ENCODE measurements at regions of chr20 and their contacts with region 1.

Region 1: GRCh38 chr20:10553326-10553984 is 118.3 kb downstream of the SLX4IP start:
- DNase-seq: peak; percentile 84
- ATAC-seq: peak; percentile 70
- H3K4me3 ChIP-seq: no peak overlapping the region
- H3K27ac ChIP-seq: peak overlapping the region; percentile 7
- H3K4me1 ChIP-seq: peaks cover 79% of the 10 kb centered on the region
- H3K27me3 ChIP-seq: no peaks in the 10 kb centered on the region
- CTCF ChIP-seq: peak; percentile 96
- EP300 ChIP-seq: no peak
- POLR2A ChIP-seq: no peak
- RAD21 ChIP-seq: peak; percentile 97

Region 2: DNA sequence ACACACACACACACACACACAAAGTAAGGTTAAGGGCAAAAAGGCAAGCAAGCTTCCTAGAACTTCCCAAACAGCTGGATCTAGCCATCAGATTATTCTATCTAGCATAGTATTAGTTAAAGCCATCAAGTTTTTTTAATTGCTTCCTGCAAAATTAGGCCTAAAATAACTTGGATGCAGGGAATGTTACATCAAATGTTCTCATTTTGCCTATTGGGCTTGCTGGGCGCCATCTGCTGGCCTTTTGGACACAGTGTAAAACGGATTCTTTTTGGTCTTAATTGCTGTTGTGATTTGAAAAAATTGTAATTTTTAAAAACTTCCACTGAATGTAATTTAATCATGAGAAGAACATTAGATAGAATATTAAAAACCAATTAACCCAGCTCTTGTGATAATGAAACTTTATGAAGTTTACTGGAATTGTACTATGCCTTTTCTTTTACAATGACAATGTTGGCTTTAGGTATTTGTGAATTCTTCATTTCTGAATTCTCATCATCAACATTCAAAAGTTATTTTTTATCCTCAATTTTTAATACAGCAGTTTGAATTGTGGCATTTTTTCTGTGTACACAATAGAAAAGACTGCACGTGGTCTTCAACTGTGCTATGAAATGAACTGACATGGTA is 126.3 kb before region 1 on chr20:
- CTCF ChIA-PET with region 1: no interaction called
- POLR2A ChIA-PET with region 1: no interaction called
- in situ Hi-C with region 1: no loop called
- intact Hi-C with region 1: no loop called
- DNase-seq: peak; percentile 71
- ATAC-seq: peak; percentile 42; the same call in 1 of the 3 replicates
- H3K4me3 ChIP-seq: no peak overlapping the region
- H3K27ac ChIP-seq: no peak overlapping the region
- H3K4me1 ChIP-seq: peaks cover 65% of the 10 kb centered on the region
- H3K27me3 ChIP-seq: no peaks in the 10 kb centered on the region
- CTCF ChIP-seq: peak; percentile 83
- EP300 ChIP-seq: no peak
- POLR2A ChIP-seq: no peak
- RAD21 ChIP-seq: peak; percentile 84

Region 3: DNA sequence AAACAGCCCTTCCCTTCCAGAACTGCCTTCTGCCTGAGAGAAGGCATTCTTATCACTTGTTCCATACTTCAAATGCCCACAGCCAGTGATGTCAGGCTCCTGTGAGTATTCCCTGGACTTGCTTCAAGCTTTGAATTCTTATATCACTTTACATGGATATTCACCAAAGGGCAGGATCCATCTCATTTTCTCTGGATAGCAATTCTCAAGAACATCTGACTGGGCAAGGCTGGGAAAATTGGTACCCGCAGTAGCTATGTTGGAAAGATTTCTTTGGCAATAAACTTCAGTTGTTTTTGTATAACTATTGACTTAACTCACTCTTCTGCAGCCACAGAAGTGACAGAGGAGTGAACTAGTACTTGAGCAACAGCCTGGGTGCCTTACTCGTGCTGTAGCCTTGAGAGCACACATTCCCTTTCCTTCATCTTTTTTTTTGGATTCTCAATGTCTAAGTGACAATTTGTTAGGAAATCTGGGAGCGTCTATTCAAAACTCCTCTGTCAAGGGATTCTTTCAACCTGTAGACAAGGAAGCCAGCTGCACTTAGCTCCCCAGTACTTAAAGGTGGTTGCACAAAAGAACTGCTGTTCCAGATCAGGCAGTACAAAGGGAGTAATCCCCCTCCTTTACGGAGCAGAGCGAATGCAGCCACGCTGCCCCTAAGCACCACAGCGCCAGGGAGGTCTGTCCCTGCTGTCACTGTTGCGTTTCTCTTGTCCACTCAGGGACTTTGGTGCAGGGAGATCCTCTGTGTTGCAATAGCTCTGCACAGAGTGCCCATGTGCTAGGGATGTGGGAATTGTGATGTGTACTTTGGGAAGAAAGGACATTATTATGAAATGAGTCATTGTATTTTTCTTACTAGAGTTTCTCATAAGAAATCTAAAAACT is 50.8 kb after region 1 on chr20:
- CTCF ChIA-PET with region 1: no interaction called
- POLR2A ChIA-PET with region 1: interaction called, 3 read pairs
- in situ Hi-C with region 1: no loop called
- intact Hi-C with region 1: loop called (anchors 2 kb)
- DNase-seq: peak; percentile 99
- ATAC-seq: peak; percentile 100
- H3K4me3 ChIP-seq: peak overlapping the region; percentile 6 to 54 (median 9); a peak in 3 of 6 replicates
- H3K27ac ChIP-seq: peak overlapping the region; percentile 76
- H3K4me1 ChIP-seq: peaks cover 31% of the 10 kb centered on the region
- H3K27me3 ChIP-seq: no peaks in the 10 kb centered on the region
- CTCF ChIP-seq: peak; percentile 61
- EP300 ChIP-seq: peak; percentile 87 to 97; a peak in 3 of 4 replicates
- POLR2A ChIP-seq: peak; percentile 62 to 83
- RAD21 ChIP-seq: peak; percentile 60; the same call in 1 of the 2 replicates

Region 4: GRCh38 chr20:10647465-10647864 is 94.0 kb after region 1 on chr20:
- CTCF ChIA-PET with region 1: interaction called, 17 read pairs
- POLR2A ChIA-PET with region 1: no interaction called
- in situ Hi-C with region 1: no loop called
- intact Hi-C with region 1: loop called (anchors 1 kb)
- DNase-seq: peak; percentile 56
- ATAC-seq: peak; percentile 72
- H3K4me3 ChIP-seq: no peak overlapping the region
- H3K27ac ChIP-seq: no peak overlapping the region
- H3K4me1 ChIP-seq: peaks cover 7% of the 10 kb centered on the region
- H3K27me3 ChIP-seq: no peaks in the 10 kb centered on the region
- CTCF ChIP-seq: peak; percentile 59
- EP300 ChIP-seq: no peak
- POLR2A ChIP-seq: no peak
- RAD21 ChIP-seq: 0 out of 2 replicates have a peak, but pooled peaks have one; percentile 34

Region 5: GRCh38 chr20:10660661-10661060 is 107.2 kb after region 1 on chr20:
- CTCF ChIA-PET with region 1: no interaction called
- POLR2A ChIA-PET with region 1: no interaction called
- in situ Hi-C with region 1: loop called (anchors 5 kb)
- intact Hi-C with region 1: no loop called
- DNase-seq: no peak
- ATAC-seq: no peak; the same call in 2 of the 3 replicates
- H3K4me3 ChIP-seq: no peak overlapping the region
- H3K27ac ChIP-seq: peak overlapping the region; percentile 7
- H3K4me1 ChIP-seq: peaks cover 71% of the 10 kb centered on the region
- H3K27me3 ChIP-seq: no peaks in the 10 kb centered on the region
- CTCF ChIP-seq: no peak
- EP300 ChIP-seq: no peak
- POLR2A ChIP-seq: no peak; a peak in 1 of 4 replicates
- RAD21 ChIP-seq: no peak

Region 6: GRCh38 chr20:10940941-10941340 is 387.5 kb after region 1 on chr20:
- CTCF ChIA-PET with region 1: no interaction called
- POLR2A ChIA-PET with region 1: no interaction called
- in situ Hi-C with region 1: no loop called
- intact Hi-C with region 1: loop called (anchors 10 kb)
- DNase-seq: no peak
- ATAC-seq: no peak
- H3K4me3 ChIP-seq: no peak overlapping the region
- H3K27ac ChIP-seq: no peak overlapping the region
- H3K4me1 ChIP-seq: no peaks in the 10 kb centered on the region
- H3K27me3 ChIP-seq: no peaks in the 10 kb centered on the region
- CTCF ChIP-seq: no peak
- EP300 ChIP-seq: no peak
- POLR2A ChIP-seq: no peak
- RAD21 ChIP-seq: no peak

Region 7: DNA sequence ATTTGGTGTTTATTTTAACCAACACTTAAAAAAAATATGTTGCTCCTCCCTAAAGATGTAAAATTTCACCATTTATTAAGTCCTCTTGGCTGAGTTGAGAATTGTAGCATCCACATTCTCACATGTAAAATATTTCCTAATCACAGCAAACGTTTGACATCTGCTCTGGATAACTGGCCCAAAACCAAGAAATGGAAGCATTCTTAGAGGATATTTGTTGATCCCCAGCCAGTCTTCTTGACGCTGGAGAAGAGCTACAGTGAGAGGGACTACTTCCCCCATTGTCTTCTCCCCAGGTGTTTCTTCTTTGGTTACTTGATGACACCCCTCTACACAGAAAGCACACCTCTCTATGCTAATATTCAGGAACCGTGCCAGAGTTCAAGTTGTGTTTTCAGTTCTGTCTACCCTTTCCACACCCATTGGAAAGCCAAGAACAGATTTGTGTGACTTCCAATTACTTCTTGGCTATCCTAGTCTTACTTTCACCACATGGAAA is 574.8 kb after region 1 on chr20:
- CTCF ChIA-PET with region 1: no interaction called
- POLR2A ChIA-PET with region 1: no interaction called
- in situ Hi-C with region 1: no loop called
- intact Hi-C with region 1: no loop called
- DNase-seq: no peak
- ATAC-seq: no peak
- H3K4me3 ChIP-seq: no peak overlapping the region
- H3K27ac ChIP-seq: no peak overlapping the region
- H3K4me1 ChIP-seq: no peaks in the 10 kb centered on the region
- H3K27me3 ChIP-seq: no peaks in the 10 kb centered on the region
- CTCF ChIP-seq: no peak
- EP300 ChIP-seq: no peak
- POLR2A ChIP-seq: no peak
- RAD21 ChIP-seq: no peak

Region 8: DNA sequence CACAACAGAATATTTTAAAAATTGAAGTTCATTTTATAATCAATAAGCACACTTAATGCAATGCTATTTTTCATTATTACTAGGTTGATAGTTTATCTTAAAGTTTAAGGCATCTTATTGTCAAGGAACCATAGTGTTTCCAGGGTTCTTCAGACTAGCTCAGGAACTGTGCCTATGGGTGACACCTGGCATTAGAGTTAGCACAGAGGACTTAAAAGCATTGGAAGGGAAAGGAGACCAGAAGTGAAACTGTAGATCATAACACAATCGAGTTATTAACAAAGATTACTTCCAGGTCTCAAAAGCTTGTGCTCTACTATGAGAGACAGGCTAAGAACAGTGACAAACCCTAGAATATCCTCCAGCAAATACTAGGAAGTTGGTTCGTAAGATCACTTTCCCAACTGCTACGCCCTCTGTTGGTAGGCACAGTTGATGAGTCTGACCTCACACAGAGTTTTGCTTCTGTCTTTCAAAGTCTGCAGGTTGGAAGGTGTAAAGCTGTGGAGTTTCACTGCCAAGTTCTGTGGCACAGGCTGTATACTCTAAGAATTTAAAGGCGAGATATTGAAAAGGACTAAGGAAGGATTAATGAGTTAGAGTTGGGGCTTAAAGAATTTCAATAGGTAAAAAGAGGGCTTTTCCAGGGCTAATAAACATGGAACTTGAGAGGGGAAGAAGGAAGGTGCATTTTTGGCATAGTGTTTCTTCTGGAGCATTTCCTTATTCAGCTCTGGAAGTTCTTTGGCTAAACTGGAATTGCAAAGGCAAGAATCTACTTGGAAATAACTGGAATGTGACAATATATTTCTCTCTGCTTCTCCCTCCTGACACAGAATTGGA is 651.7 kb after region 1 on chr20:
- CTCF ChIA-PET with region 1: interaction called, 6 read pairs
- POLR2A ChIA-PET with region 1: no interaction called
- in situ Hi-C with region 1: loop called (anchors 5 kb)
- intact Hi-C with region 1: loop called (anchors 1 kb)
- DNase-seq: peak; percentile 71
- ATAC-seq: peak; percentile 98
- H3K4me3 ChIP-seq: no peak overlapping the region
- H3K27ac ChIP-seq: no peak overlapping the region
- H3K4me1 ChIP-seq: peaks cover 11% of the 10 kb centered on the region
- H3K27me3 ChIP-seq: no peaks in the 10 kb centered on the region
- CTCF ChIP-seq: peak; percentile 91
- EP300 ChIP-seq: no peak
- POLR2A ChIP-seq: no peak
- RAD21 ChIP-seq: peak; percentile 74

Region 9: GRCh38 chr20:11544029-11544678 is 990.7 kb after region 1 on chr20:
- CTCF ChIA-PET with region 1: no interaction called
- POLR2A ChIA-PET with region 1: no interaction called
- in situ Hi-C with region 1: loop called (anchors 10 kb)
- intact Hi-C with region 1: no loop called
- DNase-seq: peak; percentile 72
- ATAC-seq: peak; percentile 88
- H3K4me3 ChIP-seq: no peak overlapping the region
- H3K27ac ChIP-seq: no peak overlapping the region
- H3K4me1 ChIP-seq: peaks cover 12% of the 10 kb centered on the region
- H3K27me3 ChIP-seq: no peaks in the 10 kb centered on the region; a peak in 1 of 5 replicates
- CTCF ChIP-seq: peak; percentile 85
- EP300 ChIP-seq: no peak
- POLR2A ChIP-seq: no peak
- RAD21 ChIP-seq: peak; percentile 41; the same call in 1 of the 2 replicates

Measured in HepG2 (cell line).